ENCODE measurements at regions of chrX and their contacts with region 1.

Region 1: GRCh38 chrX:148854209-148854691 is 353.8 kb downstream of the AFF2 start:
- DNase-seq: no peak

Region 2: DNA sequence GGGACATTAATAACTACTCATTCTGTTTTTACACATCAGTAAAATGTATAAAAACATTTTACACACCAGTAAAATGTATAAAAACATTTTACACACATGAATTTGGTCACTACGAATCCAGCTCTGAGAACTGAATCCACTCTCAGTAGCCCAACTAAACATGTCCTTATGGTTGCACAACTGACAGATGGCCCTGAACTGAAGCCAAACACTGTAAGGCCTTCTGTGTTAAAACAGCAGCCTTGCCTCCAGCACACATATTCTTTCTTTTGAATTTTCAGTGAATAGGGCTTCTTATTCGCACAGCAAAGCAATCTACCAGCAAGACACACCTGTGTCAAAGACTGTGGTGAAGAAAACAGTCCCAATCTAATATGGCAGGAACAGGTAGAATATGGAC is 1112.5 kb before region 1 on chrX:
- intact Hi-C with region 1: loop called in 1 of 2 experiments (anchors 5 kb)
- DNase-seq: no peak

Region 3: GRCh38 chrX:148905400-148905799 is 51.1 kb after region 1 on chrX:
- intact Hi-C with region 1: no loop called
- DNase-seq: no peak

Measured in posterior vena cava (tissue), 2 donors.